ENCODE measurements at regions of chr1 and their contacts with region 1.

Region 1: GRCh38 chr1:91885716-91886506 is at the start of gene TGFBR3:
- DNase-seq: peak; percentile 93
- H3K4me3 ChIP-seq: peak within 1 kb of the TSS; percentile 66 to 96 (median 88)
- H3K27ac ChIP-seq: peak within 1 kb of the TSS; percentile 71
- H3K4me1 ChIP-seq: peaks cover 14% of the 10 kb centered on the region
- H3K27me3 ChIP-seq: no peaks in the 10 kb centered on the region
- CTCF ChIP-seq: peak; percentile 34 to 59
- POLR2A ChIP-seq: peak; percentile 78
- total RNA-seq, gene TGFBR3: 10.5 and 13.4 TPM in 2 replicates

Region 2: DNA sequence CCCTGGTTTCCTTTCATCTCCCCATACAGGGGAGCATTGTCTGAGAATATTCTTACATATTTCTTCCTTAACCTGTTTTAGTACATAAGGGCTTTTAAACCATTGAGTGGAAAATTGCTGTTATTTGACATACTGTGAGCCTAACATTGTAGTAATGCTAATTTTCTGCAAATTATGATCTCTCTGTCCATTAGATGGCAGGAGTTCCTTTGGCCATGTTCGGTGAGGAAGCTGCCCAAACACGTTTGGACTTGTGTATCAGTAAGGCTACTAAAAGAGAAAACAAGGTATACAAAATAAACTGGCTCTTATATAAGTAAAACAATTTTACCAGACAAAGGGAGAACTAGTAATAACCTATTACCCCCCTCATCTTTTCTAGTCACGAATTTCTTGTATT is 356.1 kb before region 1 on chr1:
- CTCF ChIA-PET with region 1: interaction called, 7 read pairs
- POLR2A ChIA-PET with region 1: no interaction called
- dilution Hi-C with region 1: no loop called
- intact Hi-C with region 1: loop called (anchors 1 kb)
- DNase-seq: peak; percentile 43
- H3K4me3 ChIP-seq: no peak overlapping the region
- H3K27ac ChIP-seq: no peak overlapping the region
- H3K4me1 ChIP-seq: no peaks in the 10 kb centered on the region
- H3K27me3 ChIP-seq: no peaks in the 10 kb centered on the region
- CTCF ChIP-seq: peak in 1 of 2 donors; percentile 2
- POLR2A ChIP-seq: no peak

Region 3: GRCh38 chr1:91736715-91737615 is 148.9 kb before region 1 on chr1:
- CTCF ChIA-PET with region 1: interaction called, 3 read pairs
- POLR2A ChIA-PET with region 1: no interaction called
- dilution Hi-C with region 1: no loop called
- intact Hi-C with region 1: loop called (anchors 5 kb)
- DNase-seq: peak; percentile 34
- H3K4me3 ChIP-seq: no peak overlapping the region
- H3K27ac ChIP-seq: no peak overlapping the region
- H3K4me1 ChIP-seq: peaks cover 5% of the 10 kb centered on the region
- H3K27me3 ChIP-seq: no peaks in the 10 kb centered on the region
- CTCF ChIP-seq: no peak
- POLR2A ChIP-seq: no peak

Region 4: GRCh38 chr1:91830242-91831131 is 55.4 kb before region 1 on chr1:
- CTCF ChIA-PET with region 1: interaction called, 6 read pairs
- POLR2A ChIA-PET with region 1: no interaction called
- dilution Hi-C with region 1: no loop called
- intact Hi-C with region 1: loop called (anchors 1 kb)
- DNase-seq: peak; percentile 95
- H3K4me3 ChIP-seq: no peak overlapping the region
- H3K27ac ChIP-seq: no peak overlapping the region
- H3K4me1 ChIP-seq: peaks cover 4% of the 10 kb centered on the region
- H3K27me3 ChIP-seq: no peaks in the 10 kb centered on the region
- CTCF ChIP-seq: peak; percentile 44 to 67
- POLR2A ChIP-seq: no peak

Region 5: GRCh38 chr1:91913018-91913417 is 27.1 kb after region 1 on chr1:
- CTCF ChIA-PET with region 1: interaction called, 4 read pairs
- POLR2A ChIA-PET with region 1: no interaction called
- dilution Hi-C with region 1: no loop called
- intact Hi-C with region 1: loop called (anchors 2 kb)
- DNase-seq: peak; percentile 56
- H3K4me3 ChIP-seq: no peak overlapping the region
- H3K27ac ChIP-seq: peak overlapping the region; percentile 73
- H3K4me1 ChIP-seq: peaks cover 23% of the 10 kb centered on the region
- H3K27me3 ChIP-seq: no peaks in the 10 kb centered on the region
- CTCF ChIP-seq: no peak
- POLR2A ChIP-seq: no peak

Measured in endothelial cell of umbilical vein (primary cell).